Dendritic cell treated with granulocyte-macrophage colony-stimulating factor and Interleukin-4, amounts not matched to agents 40 ng/mL and 50 ng/mL, for 4 days (primary cell): ENCODE measurements at regions of chr13 and their contacts with region 1.

Region 1: GRCh38 chr13:45718063-45718462 is 15.9 kb downstream of the CBY2 start:
- H3K4me3 Mint-ChIP-seq: no peak overlapping the region
- H3K27ac Mint-ChIP-seq: no peak overlapping the region
- H3K4me1 Mint-ChIP-seq: no peaks in the 10 kb centered on the region
- H3K27me3 Mint-ChIP-seq: no peaks in the 10 kb centered on the region

Region 2: GRCh38 chr13:45511310-45512097 is 206.6 kb before region 1 on chr13:
- intact Hi-C with region 1: loop called (anchors 5 kb)
- H3K4me3 Mint-ChIP-seq: no peak overlapping the region
- H3K27ac Mint-ChIP-seq: no peak overlapping the region
- H3K4me1 Mint-ChIP-seq: peaks cover 8% of the 10 kb centered on the region
- H3K27me3 Mint-ChIP-seq: no peaks in the 10 kb centered on the region

Region 3: GRCh38 chr13:45623515-45624090 is 94.5 kb before region 1 on chr13:
- intact Hi-C with region 1: loop called (anchors 1 kb)
- H3K4me3 Mint-ChIP-seq: no peak overlapping the region
- H3K27ac Mint-ChIP-seq: no peak overlapping the region
- H3K4me1 Mint-ChIP-seq: no peaks in the 10 kb centered on the region
- H3K27me3 Mint-ChIP-seq: peaks cover 31% of the 10 kb centered on the region

Region 4: DNA sequence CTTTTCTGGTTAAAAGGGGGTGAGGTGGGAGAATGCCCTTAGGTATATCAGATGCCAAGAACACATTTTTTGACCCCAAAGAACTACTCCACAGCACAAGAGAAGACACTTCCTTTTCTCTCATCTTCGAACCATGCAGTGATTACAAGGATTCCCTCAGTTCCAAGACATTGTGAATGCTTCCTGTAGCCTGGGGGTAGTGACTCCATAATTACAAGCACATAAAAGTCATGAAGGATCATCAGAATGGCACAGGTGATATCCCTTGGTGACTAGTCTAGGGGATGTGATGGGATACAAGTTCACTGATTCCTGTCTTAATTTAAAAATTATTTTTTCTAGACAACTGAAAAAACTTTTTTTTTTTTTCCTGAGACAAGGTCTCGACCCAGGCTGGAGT is 256.4 kb after region 1 on chr13:
- intact Hi-C with region 1: no loop called
- H3K4me3 Mint-ChIP-seq: no peak overlapping the region
- H3K27ac Mint-ChIP-seq: no peak overlapping the region
- H3K4me1 Mint-ChIP-seq: no peaks in the 10 kb centered on the region
- H3K27me3 Mint-ChIP-seq: no peaks in the 10 kb centered on the region